GM18951 (cell line): ENCODE measurements at regions of chr1 and their contacts with region 1.

Region 1: DNA sequence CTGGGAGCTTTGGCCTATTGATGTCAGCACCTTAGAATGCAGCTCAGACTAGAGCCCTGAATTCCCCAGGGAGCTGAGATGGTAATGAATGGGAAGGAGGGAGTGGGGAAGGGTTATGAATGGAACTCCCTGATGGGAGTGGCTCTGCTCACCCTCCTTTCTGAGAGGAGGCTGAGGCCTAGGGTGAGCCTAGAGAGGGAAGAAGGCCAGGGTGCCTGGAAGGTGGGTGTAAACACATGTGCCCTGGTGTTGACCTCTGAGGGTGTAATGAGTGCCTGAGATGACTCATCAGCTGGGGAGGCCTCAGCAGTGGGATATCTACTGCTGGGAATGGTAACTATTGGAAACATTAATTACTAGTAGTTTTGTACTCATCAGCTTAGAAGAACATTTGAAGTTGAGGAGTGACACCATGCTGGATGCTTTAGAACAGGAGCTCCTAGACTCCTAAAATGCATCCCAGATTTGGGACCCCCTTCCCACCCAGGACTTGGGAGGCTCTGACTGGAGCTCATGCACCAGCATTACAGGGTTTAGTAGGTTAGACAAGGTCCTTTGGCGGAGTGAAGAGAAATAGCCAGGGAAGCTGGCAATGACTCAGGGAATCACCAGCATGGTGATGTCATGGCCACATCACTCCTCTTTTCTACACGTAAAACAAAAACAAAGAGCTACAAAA is 16.0 kb upstream of the PIGV start:
- POLR2A ChIP-seq: no peak

Region 2: GRCh38 chr1:26500488-26501175 is 271.1 kb before region 1 on chr1:
- in situ Hi-C with region 1: loop called (anchors 10 kb)
- POLR2A ChIP-seq: peak; percentile 51

Region 3: GRCh38 chr1:26733982-26734381 is 37.8 kb before region 1 on chr1:
- in situ Hi-C with region 1: no loop called
- POLR2A ChIP-seq: no peak

Region 4: DNA sequence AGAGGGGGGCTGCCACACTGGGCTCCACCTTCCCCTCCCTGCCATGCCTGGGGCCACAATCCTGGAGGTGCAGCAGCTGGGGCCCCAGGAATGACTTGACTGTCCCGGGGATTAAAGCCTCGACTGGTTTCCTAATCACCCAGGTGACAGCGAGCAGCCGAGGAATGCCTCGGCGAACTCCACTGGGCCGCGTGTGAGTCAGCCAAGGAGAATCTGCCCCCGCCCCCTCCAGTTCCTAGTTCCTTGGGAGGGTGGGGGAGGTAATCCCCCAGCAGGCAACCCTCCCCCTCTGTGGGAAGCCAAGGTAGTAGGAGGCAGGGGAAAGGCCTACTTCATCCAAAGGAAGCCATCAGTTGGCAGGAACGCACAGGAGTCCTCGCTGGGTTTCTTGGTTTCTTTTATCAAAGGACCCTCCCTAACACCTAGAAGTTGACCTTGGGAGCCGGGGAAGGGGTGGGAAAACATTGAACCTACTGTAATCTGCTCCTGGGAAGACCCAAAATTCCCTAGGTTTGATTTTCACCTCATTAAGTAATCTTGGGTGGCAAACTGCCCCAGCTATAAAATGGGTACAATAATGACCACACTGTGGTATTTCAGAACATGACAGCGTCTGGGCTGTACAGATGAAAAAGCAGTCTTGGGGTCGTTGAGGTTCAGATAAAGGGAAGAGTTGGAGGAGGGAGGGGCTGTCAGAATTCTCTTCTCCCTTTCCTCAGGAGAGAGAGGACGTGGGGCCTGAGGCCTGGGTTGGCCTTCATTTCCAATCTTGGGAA is 239.4 kb after region 1 on chr1:
- in situ Hi-C with region 1: no loop called
- POLR2A ChIP-seq: no peak